ENCODE measurements at regions of chr9 and their contacts with region 1.

Region 1: GRCh38 chr9:131739980-131740648 is at the start of gene RAPGEF1:
- DNase-seq: peak; percentile 35 to 94 (median 64)

Region 2: DNA sequence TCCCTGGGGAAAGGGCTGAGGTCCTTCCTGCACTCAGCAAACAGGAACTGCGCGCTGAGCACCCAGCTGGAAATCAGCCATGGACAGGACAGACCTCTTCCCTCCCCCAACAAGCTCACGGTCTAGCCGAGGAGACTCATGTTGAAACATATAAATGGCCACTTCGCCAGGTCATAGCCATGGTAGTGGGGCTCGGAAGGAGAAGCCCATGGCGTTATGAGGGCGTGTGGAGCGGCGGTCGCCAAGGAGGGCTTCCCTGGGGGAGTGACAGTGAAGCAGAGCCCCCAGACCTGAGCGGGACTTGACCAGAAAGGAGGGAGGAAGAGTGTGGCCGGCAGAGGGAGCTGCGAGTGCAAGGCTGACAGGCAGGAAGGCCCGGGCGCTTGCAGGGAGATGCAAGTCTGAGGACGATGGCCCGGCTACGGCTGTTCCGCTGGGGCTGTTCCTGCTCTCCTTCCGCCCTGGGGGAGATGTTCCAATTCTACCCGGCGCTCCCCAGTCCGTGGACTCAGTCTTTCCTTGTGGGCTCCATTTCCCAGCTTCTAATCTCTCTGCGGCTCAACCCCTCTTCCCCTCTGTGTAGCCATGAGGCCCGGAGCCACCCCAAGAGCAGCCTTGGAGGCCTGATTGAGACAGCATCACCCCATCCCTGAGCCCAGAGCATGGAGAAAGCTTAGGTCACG is 390.1 kb before region 1 on chr9:
- intact Hi-C with region 1: loop called (anchors 5 kb)
- DNase-seq: peak; percentile 79 to 98 (median 91)

Region 3: DNA sequence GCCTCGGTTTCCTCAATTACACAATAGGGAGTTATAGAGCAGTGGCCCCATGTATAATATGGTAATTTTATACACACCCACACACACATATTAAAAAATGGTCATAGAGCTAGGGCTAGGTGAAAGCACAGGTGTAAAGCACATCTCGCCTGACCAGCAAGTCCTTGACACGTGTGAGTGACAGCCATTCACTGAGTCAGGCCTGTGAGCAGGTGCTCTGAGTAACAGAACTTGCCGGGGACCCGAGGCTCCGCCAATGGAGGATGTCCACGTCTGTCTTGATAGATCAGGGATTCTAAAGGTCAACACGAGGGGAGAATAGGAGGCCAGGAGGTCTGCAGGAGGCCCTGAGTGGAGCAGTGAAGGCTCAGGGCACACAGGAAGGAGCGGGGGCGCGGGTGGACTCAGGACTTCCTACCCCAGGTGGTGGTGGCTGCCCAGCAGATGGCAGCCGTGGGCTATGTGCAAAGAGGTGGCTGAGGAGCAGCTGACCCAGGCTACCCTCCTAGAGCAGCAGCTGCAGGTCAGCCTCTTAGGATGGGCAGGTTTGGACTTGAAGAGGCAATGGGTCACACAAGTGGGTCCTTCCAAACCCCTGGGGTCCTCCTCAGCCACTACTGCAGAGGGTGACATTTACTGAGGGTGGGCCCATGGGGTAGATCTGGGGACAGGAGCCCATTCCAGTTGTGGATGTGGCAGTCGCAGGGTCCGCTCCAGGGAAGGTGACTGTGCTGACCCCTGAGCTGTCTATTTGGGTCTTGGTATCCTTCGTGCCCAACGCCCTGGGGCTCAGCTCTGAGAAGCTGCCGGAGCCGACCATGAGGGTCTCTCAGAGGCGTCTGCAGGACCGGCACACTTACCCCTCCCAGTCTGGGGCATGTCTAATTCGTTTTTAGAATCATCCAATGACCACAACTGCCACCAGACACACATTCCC is 148.9 kb before region 1 on chr9:
- intact Hi-C with region 1: loop called (anchors 1 kb)
- DNase-seq: peak; percentile 50 to 96 (median 78)